Ascending aorta (tissue), 2 donors: ENCODE measurements at regions of chrX and their contacts with region 1.

Region 1: GRCh38 chrX:18425199-18426003 is at the start of gene CDKL5:
- DNase-seq: peak; percentile 89 to 98
- H3K4me3 ChIP-seq: peak within 1 kb of the TSS; percentile 63 to 78
- H3K27ac ChIP-seq: peak within 1 kb of the TSS; percentile 74 to 75
- H3K4me1 ChIP-seq: no peaks in the 10 kb centered on the region
- H3K27me3 ChIP-seq: no peaks in the 10 kb centered on the region
- CTCF ChIP-seq: no peak
- total RNA-seq, gene CDKL5: 18.6 TPM

Region 2: DNA sequence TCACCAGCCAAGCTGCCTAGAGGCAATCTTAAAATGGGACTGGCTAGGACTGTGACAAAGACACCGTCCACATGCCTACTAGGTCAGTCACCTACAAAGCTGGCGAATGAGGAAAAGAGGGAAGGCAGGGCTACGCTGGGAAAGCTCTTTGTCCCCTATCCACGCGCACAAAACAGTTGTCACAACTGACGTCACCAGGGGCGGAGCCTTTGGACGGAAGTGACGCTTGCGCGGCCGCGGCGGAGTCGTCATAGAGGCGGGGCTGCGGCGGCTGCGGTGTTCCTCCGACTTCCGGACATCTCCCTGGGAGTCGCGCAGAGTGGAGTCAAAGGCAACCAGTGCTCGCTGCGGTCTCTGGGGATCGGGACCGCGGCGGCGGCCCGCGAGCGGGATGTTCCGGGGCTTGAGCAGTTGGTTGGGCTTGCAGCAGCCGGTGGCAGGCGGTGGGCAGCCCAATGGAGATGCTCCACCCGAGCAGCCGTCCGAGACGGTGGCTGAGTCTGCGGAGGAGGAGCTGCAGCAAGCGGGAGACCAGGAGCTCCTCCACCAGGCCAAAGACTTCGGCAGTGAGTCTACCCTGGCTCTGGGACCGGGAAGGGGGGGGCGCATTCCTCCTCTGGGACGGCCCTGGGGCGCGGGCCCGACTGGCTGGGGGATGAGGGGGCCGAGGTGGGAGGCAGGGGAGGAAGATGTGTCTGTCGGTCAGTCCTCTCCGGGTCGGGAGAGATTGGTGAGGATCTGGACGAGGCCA is 1705.9 kb before region 1 on chrX and contains the start of gene SYAP1:
- intact Hi-C with region 1: loop called (anchors 10 kb)
- DNase-seq: peak; percentile 94 to 99
- H3K4me3 ChIP-seq: peak within 1 kb of the TSS; percentile 86 to 93
- H3K27ac ChIP-seq: peak within 1 kb of the TSS; percentile 93 to 98
- H3K4me1 ChIP-seq: peaks cover 0 to 16% of the 10 kb centered on the region in 2 donors
- H3K27me3 ChIP-seq: no peaks in the 10 kb centered on the region
- CTCF ChIP-seq: no peak
- total RNA-seq, gene SYAP1: 14.2 TPM

Region 3: GRCh38 chrX:17805120-17805519 is 620.3 kb before region 1 on chrX:
- intact Hi-C with region 1: no loop called
- DNase-seq: no peak
- H3K4me3 ChIP-seq: no peak overlapping the region
- H3K27ac ChIP-seq: no peak overlapping the region
- H3K4me1 ChIP-seq: no peaks in the 10 kb centered on the region
- H3K27me3 ChIP-seq: no peaks in the 10 kb centered on the region
- CTCF ChIP-seq: no peak

Region 4: GRCh38 chrX:18457000-18457399 is 31.6 kb after region 1 on chrX:
- intact Hi-C with region 1: no loop called
- DNase-seq: no peak
- H3K4me3 ChIP-seq: no peak overlapping the region
- H3K27ac ChIP-seq: no peak overlapping the region
- H3K4me1 ChIP-seq: no peaks in the 10 kb centered on the region
- H3K27me3 ChIP-seq: no peaks in the 10 kb centered on the region
- CTCF ChIP-seq: no peak

Region 5: DNA sequence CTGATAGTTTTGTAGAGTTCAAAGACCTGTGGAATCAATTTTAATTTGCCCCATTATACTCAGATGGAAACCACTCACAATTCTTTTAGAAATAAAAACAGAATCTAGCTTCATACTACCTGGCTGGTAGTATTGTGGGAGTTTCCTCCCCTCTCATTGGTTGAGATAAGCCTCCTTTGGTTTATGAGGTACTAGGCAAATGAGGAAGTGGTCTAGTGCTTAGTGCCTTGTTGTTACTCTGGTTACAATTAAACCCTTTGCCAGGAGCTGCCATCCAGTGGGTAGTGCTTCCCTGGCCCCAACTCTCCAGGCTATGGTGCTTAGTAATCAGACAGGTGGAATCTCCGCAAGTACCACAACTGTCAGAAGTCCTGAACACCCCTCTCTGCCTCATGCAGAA is 118.3 kb after region 1 on chrX:
- intact Hi-C with region 1: loop called (anchors 5 kb)
- DNase-seq: no peak
- H3K4me3 ChIP-seq: no peak overlapping the region
- H3K27ac ChIP-seq: peak overlapping the region; percentile 16 to 63
- H3K4me1 ChIP-seq: peaks cover 0 to 2% of the 10 kb centered on the region in 2 donors
- H3K27me3 ChIP-seq: no peaks in the 10 kb centered on the region
- CTCF ChIP-seq: no peak

Region 6: DNA sequence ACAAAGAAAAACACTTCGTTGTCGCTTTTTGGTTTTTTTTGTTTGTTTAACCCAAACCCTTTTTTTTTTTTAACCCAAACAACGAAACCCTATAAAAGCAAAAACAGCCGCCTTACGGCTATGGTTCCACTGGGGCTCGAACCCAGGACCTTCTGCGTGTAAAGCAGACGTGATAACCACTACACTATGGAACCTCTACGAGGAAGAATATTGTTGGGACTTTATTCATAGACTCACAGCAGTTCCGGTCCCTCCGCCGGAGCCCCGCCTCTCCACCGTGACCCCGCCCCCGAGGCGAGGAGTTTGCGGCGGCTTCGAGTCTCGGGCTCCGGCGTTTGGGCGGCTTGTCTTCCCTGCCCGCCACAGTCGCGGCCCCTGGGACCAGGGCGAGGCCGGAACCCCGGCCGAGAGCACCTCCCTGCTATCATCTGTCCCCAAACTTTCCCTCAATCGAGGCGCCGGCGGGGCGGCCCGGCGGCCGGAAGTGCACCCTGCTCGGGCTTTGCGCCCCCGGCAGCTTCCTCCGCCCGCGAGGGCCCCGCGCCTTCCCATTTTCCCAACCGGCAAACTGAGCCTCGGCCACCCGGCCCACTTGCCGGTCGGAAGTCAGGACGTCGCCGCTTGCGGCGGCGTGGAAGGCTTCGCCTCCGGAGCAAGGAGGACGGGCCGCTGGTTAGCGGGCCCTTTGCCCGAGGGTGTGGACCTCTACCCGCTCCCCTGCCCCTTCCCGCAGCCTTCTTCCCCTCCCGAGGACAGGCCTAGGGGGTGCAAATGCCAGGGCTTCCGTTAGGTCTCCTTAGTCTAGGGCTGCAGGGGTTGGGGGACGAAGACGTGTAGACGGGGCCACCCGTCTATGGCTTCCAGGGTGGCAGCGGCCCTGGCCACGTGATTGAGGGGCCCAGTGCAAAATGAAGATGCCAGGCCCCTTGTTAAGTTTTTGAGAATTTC is 249.7 kb after region 1 on chrX:
- intact Hi-C with region 1: loop called (anchors 1 kb)
- DNase-seq: peak in 1 of 2 donors; percentile 85
- H3K4me3 ChIP-seq: peak overlapping the region; percentile 60 to 69
- H3K27ac ChIP-seq: peak overlapping the region; percentile 89 to 95
- H3K4me1 ChIP-seq: no peaks in the 10 kb centered on the region
- H3K27me3 ChIP-seq: no peaks in the 10 kb centered on the region
- CTCF ChIP-seq: no peak

Region 7: DNA sequence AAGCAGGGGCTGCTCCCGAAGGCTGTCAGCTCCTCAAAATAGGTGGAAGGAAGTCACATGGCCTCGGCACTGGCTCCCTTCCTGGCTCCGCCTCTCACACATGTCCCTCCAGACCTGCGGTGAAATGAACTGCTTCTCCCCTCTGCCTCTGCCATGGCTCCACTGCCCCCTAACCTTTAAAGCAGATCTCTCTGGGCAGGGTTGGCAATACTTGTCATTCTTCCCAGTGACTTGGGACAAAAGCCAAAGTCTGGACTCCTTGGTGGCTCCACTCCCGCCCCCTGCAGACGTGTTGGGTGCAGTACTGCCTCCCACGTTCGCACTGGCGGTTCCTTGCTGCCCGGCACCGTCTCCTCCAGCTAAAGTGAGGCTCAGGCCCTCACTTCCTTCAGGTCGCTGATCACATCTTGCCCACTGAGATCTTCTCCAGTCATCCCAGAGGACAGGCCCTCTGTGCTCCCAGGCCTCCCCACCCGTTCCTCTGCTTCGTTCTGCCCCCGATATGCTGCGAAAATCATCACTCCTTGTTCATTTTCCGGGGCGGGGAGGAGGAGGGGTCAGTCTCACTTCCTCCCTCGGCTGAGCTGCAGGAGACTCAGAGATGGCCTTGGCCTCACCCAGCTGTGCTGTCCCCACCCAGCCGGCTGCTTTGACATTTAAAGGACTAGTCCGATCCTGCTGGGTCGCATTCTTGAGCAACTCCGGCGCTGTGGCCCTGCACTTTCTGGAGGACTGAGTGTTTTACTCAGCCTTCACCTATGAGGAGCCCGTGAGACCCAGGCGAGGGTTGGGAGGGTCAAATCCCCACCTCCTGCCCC is 461.2 kb after region 1 on chrX:
- intact Hi-C with region 1: loop called (anchors 2 kb)
- DNase-seq: peak; percentile 60 to 91
- H3K4me3 ChIP-seq: peak overlapping the region; percentile 34 to 56
- H3K27ac ChIP-seq: peak overlapping the region; percentile 92 to 97
- H3K4me1 ChIP-seq: peaks cover 7 to 22% of the 10 kb centered on the region in 2 donors
- H3K27me3 ChIP-seq: no peaks in the 10 kb centered on the region
- CTCF ChIP-seq: peak; percentile 63 to 66 (median 65)

Region 8: DNA sequence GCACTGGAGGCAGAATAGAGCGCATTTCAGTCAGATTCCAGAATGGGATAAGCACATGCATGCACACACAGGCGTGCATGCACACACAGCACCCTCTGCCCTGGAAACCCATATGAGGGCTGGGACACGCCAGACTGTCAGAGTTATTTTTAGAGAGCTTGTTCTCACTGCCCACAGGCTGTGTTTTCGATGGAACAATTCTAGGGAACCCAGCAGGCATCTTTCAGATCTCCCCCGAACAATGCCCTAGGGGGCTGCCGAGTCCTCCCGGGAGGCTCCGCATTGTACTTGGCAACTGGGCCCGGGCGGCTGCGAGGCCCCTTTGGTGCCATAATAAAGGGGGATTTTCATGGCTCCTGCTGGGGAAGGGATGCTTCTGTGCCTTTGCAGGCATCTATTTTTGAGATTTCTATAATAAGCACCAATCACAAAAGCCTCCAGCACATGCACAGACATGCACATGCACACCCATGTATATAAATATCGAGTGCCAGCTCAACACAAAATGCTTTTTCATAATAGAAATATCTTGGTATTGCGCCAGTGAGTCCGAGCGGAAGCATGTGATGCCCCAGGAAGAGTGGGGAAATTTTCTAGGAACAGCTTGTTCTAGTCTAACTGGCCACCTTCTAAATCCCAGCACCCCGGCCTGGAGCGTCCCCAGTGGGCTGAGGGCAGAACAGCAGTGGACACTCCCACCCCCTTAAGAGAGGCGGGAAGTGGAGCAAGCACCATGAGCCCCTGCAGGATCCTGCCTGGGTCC is 470.0 kb after region 1 on chrX:
- intact Hi-C with region 1: loop called (anchors 2 kb)
- DNase-seq: peak in 1 of 2 donors; percentile 89
- H3K4me3 ChIP-seq: peak overlapping the region in 1 of 2 donors; percentile 36
- H3K27ac ChIP-seq: peak overlapping the region; percentile 84 to 85
- H3K4me1 ChIP-seq: peaks cover 0 to 15% of the 10 kb centered on the region in 2 donors
- H3K27me3 ChIP-seq: no peaks in the 10 kb centered on the region
- CTCF ChIP-seq: peak; percentile 61 to 78 (median 63)

Region 9: GRCh38 chrX:18984381-18985185 is 559.2 kb after region 1 on chrX:
- intact Hi-C with region 1: loop called (anchors 1 kb)
- DNase-seq: peak; percentile 13 to 85
- H3K4me3 ChIP-seq: peak overlapping the region; percentile 68 to 73
- H3K27ac ChIP-seq: peak overlapping the region; percentile 74 to 85
- H3K4me1 ChIP-seq: no peaks in the 10 kb centered on the region
- H3K27me3 ChIP-seq: no peaks in the 10 kb centered on the region
- CTCF ChIP-seq: peak; percentile 34 to 57 (median 56)